ENCODE measurements at regions of chr3 and their contacts with region 1.

Region 1: GRCh38 chr3:37736624-37737023 is 125.1 kb upstream of the CTDSPL start:
- DNase-seq: no peak
- ATAC-seq: no peak
- H3K4me3 ChIP-seq: no peak overlapping the region
- H3K4me3 Mint-ChIP-seq: no peak overlapping the region
- H3K27ac ChIP-seq: no peak overlapping the region
- H3K27ac Mint-ChIP-seq: no peak overlapping the region
- H3K4me1 ChIP-seq: no peaks in the 10 kb centered on the region
- H3K4me1 Mint-ChIP-seq: no peaks in the 10 kb centered on the region
- H3K27me3 ChIP-seq: peaks cover 0 to 14% of the 10 kb centered on the region in 2 experiments
- H3K27me3 Mint-ChIP-seq: peaks cover 4 to 5% of the 10 kb centered on the region in 2 donors

Region 2: GRCh38 chr3:37718647-37719046 is 18.0 kb before region 1 on chr3:
- CTCF ChIA-PET with region 1: interaction called in 1 of 2 experiments, 15 read pairs
- POLR2A ChIA-PET with region 1: no interaction called
- DNase-seq: no peak
- ATAC-seq: no peak
- H3K4me3 ChIP-seq: no peak overlapping the region
- H3K4me3 Mint-ChIP-seq: no peak overlapping the region
- H3K27ac ChIP-seq: no peak overlapping the region
- H3K27ac Mint-ChIP-seq: no peak overlapping the region
- H3K4me1 ChIP-seq: no peaks in the 10 kb centered on the region
- H3K4me1 Mint-ChIP-seq: no peaks in the 10 kb centered on the region
- H3K27me3 ChIP-seq: peaks cover 0 to 8% of the 10 kb centered on the region in 2 experiments
- H3K27me3 Mint-ChIP-seq: no peaks in the 10 kb centered on the region

Region 3: DNA sequence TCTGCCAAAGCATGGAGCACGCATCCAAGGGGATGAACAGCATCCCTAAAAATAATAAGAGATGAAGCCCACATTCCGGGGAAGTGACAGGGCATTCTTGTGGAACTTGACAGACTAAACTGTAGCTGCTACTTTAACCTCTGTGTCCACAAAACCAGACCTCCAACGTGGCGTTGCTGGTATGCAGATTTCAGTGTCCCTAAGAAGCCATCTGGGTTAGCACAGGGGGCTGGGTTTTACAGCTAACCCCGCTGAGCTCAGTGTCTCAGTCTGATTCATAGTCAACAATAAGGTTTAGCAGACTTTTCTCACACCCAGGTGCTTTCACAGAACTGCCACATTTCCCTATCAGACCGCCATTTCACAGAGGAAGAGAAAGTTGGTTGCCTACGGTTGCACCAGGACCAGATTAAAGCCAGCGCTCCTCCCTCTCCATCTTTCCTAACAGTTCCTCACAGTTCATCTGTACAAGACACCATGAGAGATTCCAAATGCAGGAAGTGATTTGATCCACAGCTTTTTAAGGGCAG is 63.5 kb after region 1 on chr3:
- CTCF ChIA-PET with region 1: no interaction called
- POLR2A ChIA-PET with region 1: no interaction called
- DNase-seq: no peak
- ATAC-seq: no peak
- H3K4me3 ChIP-seq: no peak overlapping the region
- H3K4me3 Mint-ChIP-seq: no peak overlapping the region
- H3K27ac ChIP-seq: no peak overlapping the region
- H3K27ac Mint-ChIP-seq: no peak overlapping the region
- H3K4me1 ChIP-seq: no peaks in the 10 kb centered on the region
- H3K4me1 Mint-ChIP-seq: no peaks in the 10 kb centered on the region
- H3K27me3 ChIP-seq: peaks cover 0 to 6% of the 10 kb centered on the region in 2 experiments
- H3K27me3 Mint-ChIP-seq: peaks cover 6% of the 10 kb centered on the region in 2 donors